Activated naive CD4-positive, alpha-beta T cell treated with anti-CD3 and anti-CD28 coated beads, Interleukin-2, amount 10 ng/mL, durations not matched to agents 7 days and 5 days (primary cell): ENCODE measurements at regions of chr3 and their contacts with region 1.

Region 1: GRCh38 chr3:179071550-179072397 is at the start of gene ZMAT3:
- DNase-seq: peak; percentile 89
- H3K4me3 Mint-ChIP-seq: peak within 1 kb of the TSS; percentile 94
- H3K27ac Mint-ChIP-seq: peak within 1 kb of the TSS; percentile 92
- H3K4me1 Mint-ChIP-seq: peaks cover 62% of the 10 kb centered on the region
- H3K27me3 Mint-ChIP-seq: no peaks in the 10 kb centered on the region

Region 2: DNA sequence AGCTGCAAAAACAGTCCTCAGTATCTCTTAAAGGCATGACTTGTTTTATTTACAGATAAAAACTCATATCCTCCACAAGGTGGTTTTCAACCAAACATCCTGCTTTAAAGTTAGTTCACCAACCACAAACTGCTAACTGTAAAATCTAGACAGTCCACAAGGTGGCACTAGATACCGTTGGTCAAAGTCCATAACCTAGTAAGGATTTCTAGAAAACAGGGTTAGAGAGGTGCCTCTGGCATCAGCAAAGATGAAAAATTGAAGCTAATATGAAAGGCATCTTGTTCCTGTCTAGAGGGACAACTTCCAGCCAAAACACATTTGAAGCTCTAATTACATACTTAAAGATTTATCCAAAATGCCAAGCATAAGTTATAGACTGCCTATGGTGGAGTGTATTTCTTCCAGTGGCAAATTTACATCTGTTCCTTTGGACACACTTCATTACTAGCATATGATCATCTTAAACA is 56.2 kb before region 1 on chr3:
- CTCF ChIA-PET with region 1: interaction called, 40 read pairs
- DNase-seq: peak; percentile 74
- H3K4me3 Mint-ChIP-seq: no peak overlapping the region
- H3K27ac Mint-ChIP-seq: peak overlapping the region; percentile 47
- H3K4me1 Mint-ChIP-seq: peaks cover 48% of the 10 kb centered on the region
- H3K27me3 Mint-ChIP-seq: no peaks in the 10 kb centered on the region

Region 3: DNA sequence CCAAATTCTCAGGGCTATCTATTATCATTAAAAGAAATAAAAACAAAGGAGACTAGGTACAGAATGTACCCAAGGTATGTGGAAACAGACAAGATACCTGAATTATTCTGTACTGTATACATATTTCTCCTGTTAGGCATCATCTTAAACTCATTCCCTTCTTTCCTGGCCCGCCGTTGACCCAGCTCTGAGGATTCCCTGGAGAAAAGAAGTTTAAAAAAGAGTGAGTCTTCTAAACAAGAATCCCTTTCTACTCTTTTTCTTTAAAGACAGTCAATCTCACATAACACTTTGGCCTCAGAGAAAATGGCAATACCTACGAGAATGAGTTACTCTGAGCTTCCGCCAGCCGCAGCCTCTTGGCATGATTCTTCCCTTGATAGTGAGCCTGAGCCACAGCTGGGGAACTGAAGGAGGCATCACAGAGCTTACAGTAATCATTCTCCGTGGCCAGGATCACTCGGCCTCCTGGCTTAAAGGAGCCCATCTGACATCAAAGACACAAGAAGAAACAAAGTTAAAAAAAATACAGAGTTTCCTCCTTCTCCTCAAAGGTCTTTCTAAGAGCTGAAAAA is 44.4 kb before region 1 on chr3:
- CTCF ChIA-PET with region 1: interaction called, 10 read pairs
- DNase-seq: peak; percentile 45
- H3K4me3 Mint-ChIP-seq: no peak overlapping the region
- H3K27ac Mint-ChIP-seq: peak overlapping the region; percentile 86
- H3K4me1 Mint-ChIP-seq: peaks cover 23% of the 10 kb centered on the region
- H3K27me3 Mint-ChIP-seq: no peaks in the 10 kb centered on the region

Region 4: GRCh38 chr3:179322286-179323196 is 250.8 kb after region 1 on chr3 and contains the start of gene ZNF639:
- CTCF ChIA-PET with region 1: interaction called, 24 read pairs
- DNase-seq: peak; percentile 87
- H3K4me3 Mint-ChIP-seq: peak within 1 kb of the TSS; percentile 85
- H3K27ac Mint-ChIP-seq: peak within 1 kb of the TSS; percentile 94
- H3K4me1 Mint-ChIP-seq: peaks cover 35% of the 10 kb centered on the region
- H3K27me3 Mint-ChIP-seq: peaks cover 15% of the 10 kb centered on the region